A549 (cell line): ENCODE measurements at regions of chr11 and their contacts with region 1.

Region 1: DNA sequence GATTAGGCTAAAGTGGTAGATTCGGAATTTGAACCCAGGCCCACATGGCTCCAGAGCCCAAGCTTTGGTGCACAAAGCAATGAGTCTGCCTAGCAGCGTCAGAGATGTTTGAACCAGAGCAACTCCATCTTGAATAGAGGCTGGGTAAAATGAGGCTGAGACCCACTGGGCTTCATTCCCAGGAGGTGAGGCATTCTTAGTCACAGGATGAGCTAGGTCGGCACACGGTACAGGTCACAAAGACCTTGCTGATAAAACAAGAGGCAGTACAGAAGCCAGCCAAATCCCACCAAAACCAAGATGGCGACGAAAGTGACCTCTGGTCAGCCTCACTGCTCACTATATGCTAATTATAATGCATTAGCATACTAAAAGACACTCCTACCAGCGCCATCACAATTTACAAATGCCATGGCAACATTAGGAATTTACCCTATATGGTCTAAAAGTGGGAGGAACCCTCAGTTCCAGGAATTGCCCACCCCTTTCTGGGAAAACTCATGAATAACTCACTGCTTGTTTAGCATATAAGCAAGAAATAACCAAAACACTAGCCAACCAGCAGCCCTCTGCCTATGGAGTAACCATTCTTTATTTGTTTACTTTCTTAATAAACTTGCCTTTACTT is 40.3 kb upstream of the DAGLA start:
- DNase-seq: no peak
- ATAC-seq: no peak
- H3K4me3 ChIP-seq: no peak overlapping the region
- H3K27ac ChIP-seq: no peak overlapping the region
- H3K4me1 ChIP-seq: no peaks in the 10 kb centered on the region
- CTCF ChIP-seq: no peak
- EP300 ChIP-seq: no peak
- POLR2A ChIP-seq: no peak
- RAD21 ChIP-seq: no peak

Region 2: GRCh38 chr11:61183635-61184034 is 456.3 kb before region 1 on chr11:
- CTCF ChIA-PET with region 1: no interaction called
- POLR2A ChIA-PET with region 1: no interaction called
- DNase-seq: no peak
- ATAC-seq: no peak
- H3K4me3 ChIP-seq: no peak overlapping the region
- H3K27ac ChIP-seq: no peak overlapping the region
- H3K4me1 ChIP-seq: no peaks in the 10 kb centered on the region
- CTCF ChIP-seq: no peak
- EP300 ChIP-seq: no peak
- POLR2A ChIP-seq: no peak
- RAD21 ChIP-seq: no peak

Region 3: DNA sequence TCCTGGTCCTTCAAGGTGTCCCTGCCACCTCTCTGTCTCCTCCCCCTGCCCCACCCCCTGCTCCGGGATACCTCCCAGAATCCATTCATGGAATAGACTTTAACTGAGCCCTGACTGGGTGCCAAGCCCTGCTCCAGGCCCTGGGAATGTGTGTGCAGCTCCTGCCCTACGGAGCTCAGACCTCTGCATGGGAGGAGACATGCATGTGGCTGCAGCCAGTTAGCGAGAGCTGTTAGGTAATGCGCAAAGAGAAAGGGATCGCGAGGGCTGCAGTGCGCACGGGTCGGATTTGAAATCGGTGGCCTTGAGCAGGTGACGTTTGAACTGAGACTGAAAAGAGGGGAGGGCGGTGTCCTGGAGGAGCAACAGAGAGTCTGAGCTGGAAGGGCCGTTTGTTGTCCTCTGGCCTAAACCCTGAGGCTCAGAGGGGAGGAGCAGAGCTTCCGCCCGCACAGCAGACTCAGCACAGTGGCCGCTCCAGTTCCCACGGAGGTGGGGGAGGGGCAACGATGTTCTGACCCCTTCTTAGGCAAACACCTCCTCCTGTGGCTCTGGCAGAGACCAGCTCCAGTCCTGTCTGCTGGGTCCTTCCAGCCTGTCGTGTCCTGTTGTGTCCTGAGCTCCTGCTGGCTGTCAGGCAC is 151.2 kb before region 1 on chr11:
- CTCF ChIA-PET with region 1: interaction called, 10 read pairs
- POLR2A ChIA-PET with region 1: no interaction called
- DNase-seq: no peak
- ATAC-seq: peak in 1 of 2 experiments; percentile 14; a peak in 1 of 6 replicates
- H3K4me3 ChIP-seq: no peak overlapping the region
- H3K27ac ChIP-seq: no peak overlapping the region
- H3K4me1 ChIP-seq: no peaks in the 10 kb centered on the region
- CTCF ChIP-seq: no peak
- EP300 ChIP-seq: no peak
- POLR2A ChIP-seq: no peak
- RAD21 ChIP-seq: no peak

Region 4: GRCh38 chr11:61580271-61580888 is 59.5 kb before region 1 on chr11:
- CTCF ChIA-PET with region 1: interaction called, 12 read pairs
- POLR2A ChIA-PET with region 1: no interaction called
- DNase-seq: peak in 1 of 2 experiments; percentile 39
- ATAC-seq: peak; percentile 14 to 25; a peak in 4 of 6 replicates
- H3K4me3 ChIP-seq: peak overlapping the region; percentile 57
- H3K27ac ChIP-seq: peak overlapping the region; percentile 61 to 91
- H3K4me1 ChIP-seq: peaks cover 13% of the 10 kb centered on the region; the same call in 2 of the 3 replicates
- CTCF ChIP-seq: no peak; the same call in 1 of the 3 replicates
- EP300 ChIP-seq: no peak
- POLR2A ChIP-seq: no peak
- RAD21 ChIP-seq: no peak

Region 5: DNA sequence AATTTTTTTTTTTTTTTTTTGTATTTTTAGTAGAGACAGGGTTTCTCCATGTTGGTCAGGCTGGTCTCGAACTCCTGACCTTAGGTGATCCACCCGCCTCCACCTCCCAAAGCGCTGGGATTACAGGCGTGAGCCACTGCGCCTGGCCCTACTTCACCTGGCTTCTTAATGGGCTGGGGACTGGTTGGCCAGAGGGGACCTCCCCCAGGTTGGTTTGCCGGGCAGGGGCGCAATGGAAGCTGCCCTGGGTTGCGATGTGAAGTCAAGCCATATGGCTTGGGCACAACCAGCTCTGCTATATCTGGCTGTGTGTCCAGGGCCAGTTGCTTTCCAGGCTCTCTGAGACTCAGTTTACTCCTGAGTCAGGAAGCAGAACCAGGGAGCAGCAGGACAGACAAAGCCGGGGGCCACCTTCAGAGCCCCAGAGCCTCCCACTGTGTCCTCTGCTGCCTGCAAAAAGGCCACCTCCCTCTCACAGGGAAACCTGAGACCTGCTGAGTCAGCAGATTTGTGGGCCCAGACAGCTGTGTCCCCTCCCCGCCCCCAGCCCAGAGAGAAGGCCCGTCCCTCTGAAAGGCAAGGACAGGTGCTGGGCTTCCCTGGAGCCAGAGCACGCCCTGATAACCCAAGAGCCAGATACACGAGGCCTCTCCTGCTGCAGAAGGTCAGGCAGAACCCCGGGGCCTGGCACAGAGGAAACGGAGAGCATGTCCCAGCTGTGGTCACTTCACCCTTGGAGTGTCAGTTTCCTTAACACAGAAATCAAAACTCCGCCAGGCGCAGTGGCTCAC is 11.0 kb after region 1 on chr11:
- CTCF ChIA-PET with region 1: interaction called, 26 read pairs
- POLR2A ChIA-PET with region 1: no interaction called
- DNase-seq: no peak
- ATAC-seq: no peak
- H3K4me3 ChIP-seq: no peak overlapping the region
- H3K27ac ChIP-seq: no peak overlapping the region
- H3K4me1 ChIP-seq: peaks cover 18% of the 10 kb centered on the region
- CTCF ChIP-seq: no peak
- EP300 ChIP-seq: no peak
- POLR2A ChIP-seq: no peak
- RAD21 ChIP-seq: no peak

Region 6: DNA sequence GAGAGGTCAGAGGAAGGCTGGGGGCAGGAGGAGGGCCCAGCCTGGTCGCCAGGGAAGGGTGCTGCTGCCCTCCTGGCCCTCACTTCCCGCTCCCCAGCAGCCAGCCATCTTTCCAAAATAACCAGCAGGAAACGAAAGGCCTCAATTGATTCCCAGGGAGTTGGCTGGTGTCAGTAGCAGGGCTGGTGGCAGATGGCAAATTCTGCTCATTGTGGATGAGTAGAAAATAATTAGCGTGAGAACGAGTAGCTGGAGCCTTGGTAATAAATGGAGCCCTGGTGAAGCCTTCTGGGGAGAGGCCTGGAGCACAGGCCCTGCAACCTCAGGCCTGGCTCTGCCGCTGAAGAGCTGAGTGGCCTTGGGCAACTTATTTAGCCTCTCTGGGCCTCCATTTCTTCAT is 71.6 kb after region 1 on chr11:
- CTCF ChIA-PET with region 1: interaction called, 13 read pairs
- POLR2A ChIA-PET with region 1: no interaction called
- DNase-seq: no peak
- ATAC-seq: no peak
- H3K4me3 ChIP-seq: no peak overlapping the region
- H3K27ac ChIP-seq: no peak overlapping the region
- H3K4me1 ChIP-seq: peaks cover 7% of the 10 kb centered on the region
- CTCF ChIP-seq: no peak
- EP300 ChIP-seq: no peak
- POLR2A ChIP-seq: no peak
- RAD21 ChIP-seq: no peak